ENCODE measurements at regions of chr3 and their contacts with region 1.

Region 1: GRCh38 chr3:37338500-37338899 is 164.1 kb upstream of the LRRFIP2 start:
- DNase-seq: no peak
- ATAC-seq: no peak
- H3K4me3 Mint-ChIP-seq: no peak overlapping the region
- H3K27ac Mint-ChIP-seq: no peak overlapping the region
- H3K4me1 Mint-ChIP-seq: no peaks in the 10 kb centered on the region
- H3K27me3 Mint-ChIP-seq: no peaks in the 10 kb centered on the region

Region 2: DNA sequence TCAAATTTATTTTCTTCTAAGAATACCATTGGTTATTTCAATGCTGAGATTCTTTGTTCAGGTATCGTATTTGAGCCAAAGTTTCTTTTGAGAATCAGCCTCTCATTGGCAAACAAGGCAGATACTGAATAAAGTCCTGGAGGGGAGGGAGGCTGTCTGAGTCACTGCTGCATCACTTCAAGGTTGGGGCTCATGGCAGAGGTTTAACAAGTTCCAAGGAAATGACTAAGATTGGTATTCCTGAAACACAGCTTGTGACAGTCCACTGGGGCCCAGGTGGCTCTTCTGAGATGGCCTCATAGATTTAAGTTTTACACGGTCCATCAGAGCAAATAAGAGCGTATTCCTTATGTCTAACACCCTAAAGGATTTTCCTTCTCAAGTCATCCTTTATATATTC is 1172.0 kb before region 1 on chr3:
- CTCF ChIA-PET with region 1: no interaction called
- POLR2A ChIA-PET with region 1: no interaction called
- intact Hi-C with region 1: no loop called
- DNase-seq: no peak
- ATAC-seq: no peak
- H3K4me3 Mint-ChIP-seq: no peak overlapping the region
- H3K27ac Mint-ChIP-seq: no peak overlapping the region
- H3K4me1 Mint-ChIP-seq: no peaks in the 10 kb centered on the region
- H3K27me3 Mint-ChIP-seq: peaks cover 2% of the 10 kb centered on the region

Region 3: DNA sequence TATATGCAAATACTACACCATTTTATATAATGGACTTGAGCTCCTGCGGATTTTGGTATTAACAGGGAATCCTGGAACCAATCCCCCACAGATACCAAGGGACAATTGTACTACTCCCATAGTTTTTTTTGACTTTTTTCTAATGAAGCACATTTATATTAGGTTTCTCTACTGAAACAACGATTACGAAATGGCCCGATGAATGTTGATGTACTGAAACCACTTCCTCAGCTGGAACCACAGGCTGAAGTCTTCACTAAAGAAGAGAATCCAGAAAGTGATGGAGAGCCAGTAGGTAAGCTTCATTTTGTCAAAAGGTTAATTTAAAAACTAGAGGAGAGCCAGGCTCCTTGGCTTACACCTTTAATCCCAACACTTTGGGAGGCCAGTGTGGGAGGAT is 42.6 kb before region 1 on chr3:
- CTCF ChIA-PET with region 1: no interaction called
- POLR2A ChIA-PET with region 1: no interaction called
- intact Hi-C with region 1: no loop called
- DNase-seq: no peak
- ATAC-seq: no peak
- H3K4me3 Mint-ChIP-seq: no peak overlapping the region
- H3K27ac Mint-ChIP-seq: no peak overlapping the region
- H3K4me1 Mint-ChIP-seq: peaks cover 13% of the 10 kb centered on the region
- H3K27me3 Mint-ChIP-seq: no peaks in the 10 kb centered on the region

Region 4: DNA sequence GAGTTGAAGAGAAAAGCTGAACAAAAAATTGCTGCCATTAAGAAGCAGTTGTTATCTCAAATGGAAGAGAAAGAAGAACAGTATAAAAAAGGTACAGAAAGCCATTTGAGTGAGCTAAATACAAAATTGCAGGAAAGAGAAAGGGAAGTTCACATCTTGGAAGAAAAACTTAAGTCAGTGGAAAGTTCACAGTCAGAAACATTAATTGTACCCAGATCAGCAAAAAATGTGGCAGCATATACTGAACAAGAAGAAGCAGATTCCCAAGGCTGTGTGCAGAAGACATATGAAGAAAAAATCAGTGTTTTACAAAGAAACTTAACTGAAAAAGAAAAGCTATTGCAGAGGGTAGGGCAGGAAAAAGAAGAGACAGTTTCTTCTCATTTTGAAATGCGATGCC is 11.7 kb before region 1 on chr3:
- CTCF ChIA-PET with region 1: interaction called, 11 read pairs
- POLR2A ChIA-PET with region 1: no interaction called
- intact Hi-C with region 1: no loop called
- DNase-seq: no peak
- ATAC-seq: no peak
- H3K4me3 Mint-ChIP-seq: no peak overlapping the region
- H3K27ac Mint-ChIP-seq: no peak overlapping the region
- H3K4me1 Mint-ChIP-seq: peaks cover 27% of the 10 kb centered on the region
- H3K27me3 Mint-ChIP-seq: no peaks in the 10 kb centered on the region